CD4-positive, alpha-beta memory T cell (primary cell): ENCODE measurements at regions of chr6 and their contacts with region 1.

Region 1: GRCh38 chr6:31366693-31367470 is 9.9 kb upstream of the HLA-B start:
- DNase-seq: peak; percentile 81 to 88 (median 85)
- H3K4me3 ChIP-seq: peak overlapping the region; percentile 30 to 67
- H3K4me3 Mint-ChIP-seq: peak overlapping the region; percentile 77 to 87 (median 86)
- H3K27ac ChIP-seq: peak overlapping the region; percentile 18
- H3K27ac Mint-ChIP-seq: peak overlapping the region; percentile 9 to 88 (median 77)
- H3K4me1 ChIP-seq: peaks cover 10% of the 10 kb centered on the region
- H3K4me1 Mint-ChIP-seq: peaks cover 10 to 16% (median 12%) of the 10 kb centered on the region in 4 donors
- H3K27me3 ChIP-seq: peaks cover 13% of the 10 kb centered on the region
- H3K27me3 Mint-ChIP-seq: peaks cover 9 to 12% of the 10 kb centered on the region in 2 donors

Region 2: DNA sequence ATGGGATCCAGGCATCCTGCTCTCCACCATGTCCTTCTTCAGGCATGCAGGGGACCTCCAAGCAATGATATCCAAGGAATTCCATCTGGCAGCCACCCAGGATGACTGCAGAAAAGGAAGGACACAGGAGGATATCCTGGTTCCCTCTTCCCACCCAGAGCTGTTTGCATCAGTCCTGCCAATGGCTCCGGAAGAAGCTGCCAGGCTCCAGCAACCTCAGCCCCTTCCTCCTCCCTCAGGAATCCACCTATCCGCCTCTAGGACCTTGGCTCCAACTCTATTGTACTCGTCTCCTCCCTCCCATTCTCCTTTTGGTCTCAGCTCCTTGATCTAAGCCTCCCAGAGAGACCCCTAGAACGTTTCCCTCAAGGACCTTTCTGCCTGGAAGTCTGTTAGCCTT is 227.3 kb before region 1 on chr6:
- CTCF ChIA-PET with region 1: interaction called, 67 read pairs
- POLR2A ChIA-PET with region 1: interaction called, 19 read pairs
- intact Hi-C with region 1: loop called (anchors 1 kb)
- DNase-seq: no peak
- H3K4me3 ChIP-seq: no peak overlapping the region
- H3K4me3 Mint-ChIP-seq: no peak overlapping the region
- H3K27ac ChIP-seq: no peak overlapping the region
- H3K27ac Mint-ChIP-seq: peak overlapping the region in 2 of 7 donors; percentile 32 to 63
- H3K4me1 ChIP-seq: peaks cover 5% of the 10 kb centered on the region
- H3K4me1 Mint-ChIP-seq: peaks cover 3 to 11% (median 5%) of the 10 kb centered on the region in 4 donors
- H3K27me3 ChIP-seq: no peaks in the 10 kb centered on the region
- H3K27me3 Mint-ChIP-seq: peaks cover 0 to 2% of the 10 kb centered on the region in 2 donors

Region 3: DNA sequence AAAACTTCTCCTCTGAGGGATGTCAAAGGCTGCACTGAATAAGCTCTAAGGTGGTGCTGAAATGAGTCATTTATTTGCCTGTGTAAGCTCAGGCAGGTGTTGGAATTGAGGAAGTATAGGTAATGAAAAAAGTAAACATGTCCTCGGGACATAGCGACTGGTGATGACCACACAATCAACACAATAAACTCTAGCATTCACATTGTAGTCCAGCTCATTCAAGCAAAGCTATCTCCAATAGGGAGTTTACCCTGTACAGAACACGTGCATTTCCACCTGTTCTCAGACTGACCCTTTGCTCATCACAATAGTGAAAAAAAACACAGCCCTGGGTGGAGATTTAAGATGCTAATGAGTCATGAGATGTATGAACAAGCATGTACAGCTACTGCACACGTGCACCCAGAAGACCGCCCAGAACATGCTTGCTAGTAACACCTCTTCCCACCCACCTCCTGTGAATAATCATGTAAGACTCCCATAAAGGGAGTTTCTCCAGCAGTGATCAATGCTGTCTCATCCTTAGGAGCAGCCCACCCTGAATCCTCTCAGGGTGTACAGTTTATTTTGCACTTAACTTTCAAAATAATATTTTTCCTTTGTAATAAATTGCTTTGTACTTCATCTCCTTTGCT is 163.4 kb before region 1 on chr6:
- CTCF ChIA-PET with region 1: interaction called, 184 read pairs
- POLR2A ChIA-PET with region 1: interaction called, 517 read pairs
- intact Hi-C with region 1: no loop called
- DNase-seq: peak in 3 of 5 donors; percentile 48 to 86 (median 62)
- H3K4me3 ChIP-seq: peak overlapping the region; percentile 60 to 66
- H3K4me3 Mint-ChIP-seq: peak overlapping the region; percentile 81 to 99 (median 92)
- H3K27ac ChIP-seq: peak overlapping the region; percentile 76
- H3K27ac Mint-ChIP-seq: peak overlapping the region; percentile 92 to 100 (median 97)
- H3K4me1 ChIP-seq: peaks cover 59% of the 10 kb centered on the region
- H3K4me1 Mint-ChIP-seq: peaks cover 46 to 72% (median 56%) of the 10 kb centered on the region in 4 donors
- H3K27me3 ChIP-seq: no peaks in the 10 kb centered on the region
- H3K27me3 Mint-ChIP-seq: no peaks in the 10 kb centered on the region

Region 4: DNA sequence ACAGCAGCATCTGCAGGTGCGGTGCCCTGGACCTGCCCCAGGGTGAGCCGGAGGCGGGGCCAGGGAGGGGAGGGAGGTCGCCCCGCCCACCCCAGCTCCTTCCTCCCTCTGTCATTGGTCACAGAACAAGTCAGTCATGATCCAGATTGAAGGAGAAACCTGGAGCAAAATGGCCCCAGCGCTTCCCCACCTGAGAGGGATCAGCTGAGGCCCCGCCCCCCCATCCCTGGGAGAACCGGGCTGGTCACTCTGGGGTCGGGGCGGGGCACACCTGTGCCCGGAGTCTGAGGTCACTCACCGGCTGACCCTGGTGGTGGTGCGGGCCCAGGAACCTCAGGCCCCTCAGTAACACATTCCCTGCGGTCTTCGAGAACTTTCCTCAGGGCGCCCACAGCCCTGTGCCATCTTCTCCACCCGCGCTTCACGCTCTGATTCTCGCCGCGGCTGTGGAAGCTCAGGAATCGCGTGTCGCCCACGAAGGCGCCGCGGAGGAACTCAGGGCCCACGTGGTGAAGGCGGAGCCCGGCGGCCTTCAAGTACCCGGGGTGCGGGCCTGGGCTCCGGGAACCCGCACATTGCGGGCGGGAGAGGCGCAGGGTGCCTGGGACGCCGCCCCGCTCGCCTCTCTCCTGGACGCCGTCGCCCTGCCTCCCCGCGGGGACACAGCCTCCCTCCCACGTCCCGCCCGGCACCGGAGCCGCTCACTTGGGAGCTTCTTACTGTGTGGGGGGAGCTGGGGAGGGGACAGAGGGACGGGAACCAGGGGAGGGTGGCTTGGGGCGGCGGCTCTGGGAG is 58.6 kb before region 1 on chr6:
- CTCF ChIA-PET with region 1: interaction called, 9 read pairs
- POLR2A ChIA-PET with region 1: interaction called, 14 read pairs
- intact Hi-C with region 1: no loop called
- DNase-seq: peak; percentile 69 to 83 (median 76)
- H3K4me3 ChIP-seq: peak overlapping the region; percentile 55 to 60
- H3K4me3 Mint-ChIP-seq: peak overlapping the region; percentile 84 to 94 (median 88)
- H3K27ac ChIP-seq: no peak overlapping the region
- H3K27ac Mint-ChIP-seq: peak overlapping the region in 4 of 7 donors; percentile 87 to 96 (median 89)
- H3K4me1 ChIP-seq: peaks cover 12% of the 10 kb centered on the region
- H3K4me1 Mint-ChIP-seq: peaks cover 1 to 14% (median 3%) of the 10 kb centered on the region in 4 donors
- H3K27me3 ChIP-seq: no peaks in the 10 kb centered on the region
- H3K27me3 Mint-ChIP-seq: peaks cover 8 to 9% of the 10 kb centered on the region in 2 donors

Region 5: GRCh38 chr6:31383149-31383548 is 16.3 kb after region 1 on chr6:
- CTCF ChIA-PET with region 1: interaction called, 12 read pairs
- POLR2A ChIA-PET with region 1: no interaction called
- intact Hi-C with region 1: no loop called
- DNase-seq: no peak
- H3K4me3 ChIP-seq: no peak overlapping the region
- H3K4me3 Mint-ChIP-seq: no peak overlapping the region
- H3K27ac ChIP-seq: no peak overlapping the region
- H3K27ac Mint-ChIP-seq: no peak overlapping the region
- H3K4me1 ChIP-seq: no peaks in the 10 kb centered on the region
- H3K4me1 Mint-ChIP-seq: no peaks in the 10 kb centered on the region
- H3K27me3 ChIP-seq: peaks cover 7% of the 10 kb centered on the region
- H3K27me3 Mint-ChIP-seq: peaks cover 7 to 8% of the 10 kb centered on the region in 2 donors